Activated T-helper 2 cell treated with anti-CD3 and anti-CD28 coated beads, Interferon-gamma antibody, Interleukin-2, Interleukin-4, amounts not matched to agents 10 μg/mL and 5 μg/mL and 100 μg/mL, durations not matched to agents 14 hours and 24 hours and 36 hours (primary cell): ENCODE measurements at regions of chr7 and their contacts with region 1.

Region 1: DNA sequence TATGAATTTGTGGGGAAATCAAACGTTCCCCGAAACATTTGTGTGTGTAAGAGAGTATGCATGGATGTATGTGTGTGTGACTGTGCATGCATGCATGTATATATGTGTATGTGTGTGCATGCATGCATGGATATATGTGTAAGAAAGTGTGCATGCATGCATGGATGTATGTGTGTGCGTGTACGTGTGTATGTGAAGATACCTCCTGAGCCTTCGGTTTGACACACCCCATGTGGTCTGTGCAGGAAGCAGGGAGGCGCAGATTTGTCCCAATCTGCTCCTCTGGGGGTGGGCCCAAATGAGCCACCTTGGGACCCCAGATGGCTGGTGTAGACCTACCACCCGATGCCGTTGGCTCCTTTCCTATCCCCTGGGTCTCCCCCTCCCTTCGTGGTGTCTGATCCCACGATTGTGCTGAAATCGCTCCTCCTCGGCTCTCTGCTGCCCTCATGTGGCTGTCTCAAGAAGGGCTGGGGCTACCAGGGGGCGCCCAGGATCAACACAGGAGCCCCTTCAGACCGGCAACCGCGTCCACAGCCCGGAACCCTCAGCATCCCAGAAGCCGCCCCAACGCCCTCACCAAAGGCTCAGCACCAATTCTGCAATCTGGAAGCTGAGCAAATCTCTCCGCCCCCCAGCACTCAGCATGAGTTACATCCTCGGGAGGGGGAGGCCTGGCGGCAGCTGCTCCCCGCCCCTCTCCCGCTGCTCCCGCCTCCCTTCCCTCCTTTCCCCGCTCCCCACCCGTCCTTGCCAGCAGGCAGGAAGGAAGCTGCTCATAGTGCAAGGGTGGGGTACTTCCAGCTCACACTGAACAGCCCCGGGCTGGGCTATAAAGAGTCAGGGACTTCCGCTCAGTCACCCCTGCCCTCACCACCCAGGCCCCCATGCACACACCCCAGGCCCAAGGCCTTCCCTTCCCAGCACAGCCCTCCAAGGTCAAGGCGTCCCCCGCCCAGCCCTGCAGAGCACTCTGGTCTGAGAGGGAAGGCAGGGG is 2.3 kb upstream of the NOS3 start:
- DNase-seq: peak; percentile 55
- H3K4me3 Mint-ChIP-seq: peak overlapping the region; percentile 14
- H3K27ac Mint-ChIP-seq: no peak overlapping the region
- H3K4me1 Mint-ChIP-seq: peaks cover 12% of the 10 kb centered on the region
- H3K27me3 Mint-ChIP-seq: peaks cover 30% of the 10 kb centered on the region

Region 2: DNA sequence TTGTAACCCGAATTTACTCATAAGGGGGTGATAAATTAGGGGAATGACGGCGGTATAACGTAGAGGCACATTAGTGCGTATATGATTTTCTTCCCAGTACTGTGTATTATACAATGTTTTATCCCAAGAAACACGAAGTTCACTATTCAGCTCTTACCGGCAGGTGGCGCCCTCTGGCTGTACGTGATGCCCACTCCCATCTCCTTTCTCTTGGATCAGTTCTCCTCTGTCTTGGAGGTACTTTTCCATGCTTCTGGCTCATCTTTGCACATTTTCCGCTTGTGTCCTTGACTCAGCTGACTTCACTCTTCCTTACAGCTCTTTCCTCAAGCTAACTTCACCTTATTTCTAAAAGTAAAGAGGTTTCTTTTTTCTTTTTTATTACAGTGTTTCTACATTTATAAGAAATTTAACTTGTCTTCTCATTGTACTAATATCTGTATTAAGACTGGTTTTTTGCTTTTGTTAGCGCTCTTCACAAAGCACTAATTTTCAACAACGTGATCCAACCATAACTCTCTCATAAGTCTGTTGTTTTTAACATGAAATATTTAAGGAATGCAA is 209.7 kb before region 1 on chr7:
- intact Hi-C with region 1: loop called (anchors 1 kb)
- DNase-seq: peak; percentile 55
- H3K4me3 Mint-ChIP-seq: no peak overlapping the region
- H3K27ac Mint-ChIP-seq: no peak overlapping the region
- H3K4me1 Mint-ChIP-seq: no peaks in the 10 kb centered on the region
- H3K27me3 Mint-ChIP-seq: peaks cover 27% of the 10 kb centered on the region

Region 3: GRCh38 chr7:150898475-150899011 is 90.0 kb before region 1 on chr7:
- intact Hi-C with region 1: loop called (anchors 1 kb)
- DNase-seq: peak; percentile 61
- H3K4me3 Mint-ChIP-seq: no peak overlapping the region
- H3K27ac Mint-ChIP-seq: no peak overlapping the region
- H3K4me1 Mint-ChIP-seq: peaks cover 4% of the 10 kb centered on the region
- H3K27me3 Mint-ChIP-seq: peaks cover 45% of the 10 kb centered on the region

Region 4: GRCh38 chr7:150962553-150963399 is 25.8 kb before region 1 on chr7:
- intact Hi-C with region 1: loop called (anchors 1 kb)
- DNase-seq: peak; percentile 40
- H3K4me3 Mint-ChIP-seq: no peak overlapping the region
- H3K27ac Mint-ChIP-seq: no peak overlapping the region
- H3K4me1 Mint-ChIP-seq: peaks cover 2% of the 10 kb centered on the region
- H3K27me3 Mint-ChIP-seq: peaks cover 32% of the 10 kb centered on the region

Region 5: DNA sequence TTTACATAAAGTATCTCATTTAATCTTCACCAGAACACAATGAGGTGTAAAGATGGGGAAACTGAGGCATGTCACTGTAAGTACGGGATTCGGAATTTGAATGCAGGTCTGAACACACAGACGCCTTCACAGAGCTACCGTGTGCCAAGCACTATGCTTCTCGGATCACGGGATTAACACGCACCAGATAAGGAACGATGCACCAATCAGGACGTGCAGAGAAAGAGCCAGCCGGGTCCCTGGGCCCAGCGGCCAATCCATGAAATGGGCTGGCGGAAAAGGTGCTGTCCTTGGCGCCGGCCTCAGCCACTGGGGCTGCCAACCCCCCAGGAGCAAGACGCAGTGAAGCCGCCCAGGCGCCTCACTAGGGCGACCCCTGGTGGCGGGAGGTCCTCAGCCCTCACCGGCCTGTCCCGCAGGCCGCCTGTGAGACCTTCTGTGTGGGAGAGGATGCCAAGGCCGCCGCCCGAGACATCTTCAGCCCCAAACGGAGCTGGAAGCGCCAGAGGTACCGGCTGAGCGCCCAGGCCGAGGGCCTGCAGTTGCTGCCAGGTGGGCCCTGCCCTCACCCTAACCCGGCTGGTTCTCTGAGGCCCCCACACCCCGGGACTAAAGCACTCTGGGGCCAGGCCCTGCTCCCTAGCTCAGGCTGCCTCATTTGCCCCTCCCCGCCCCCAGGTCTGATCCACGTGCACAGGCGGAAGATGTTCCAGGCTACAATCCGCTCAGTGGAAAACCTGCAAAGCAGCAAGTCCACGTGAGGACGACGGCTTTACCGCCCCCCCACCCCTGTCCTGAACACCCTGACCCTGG is 20.2 kb after region 1 on chr7:
- intact Hi-C with region 1: no loop called
- DNase-seq: peak; percentile 67
- H3K4me3 Mint-ChIP-seq: peak overlapping the region; percentile 79
- H3K27ac Mint-ChIP-seq: peak overlapping the region; percentile 82
- H3K4me1 Mint-ChIP-seq: peaks cover 45% of the 10 kb centered on the region
- H3K27me3 Mint-ChIP-seq: no peaks in the 10 kb centered on the region